Right ventricle myocardium inferior (tissue), 1 donor: ENCODE measurements at regions of chr3 and their contacts with region 1.

Region 1: GRCh38 chr3:57164657-57165573 is at the start of gene IL17RD:
- DNase-seq: peak; percentile 88
- ATAC-seq: peak; percentile 87
- total RNA-seq, gene IL17RD: 6.7 TPM

Region 2: DNA sequence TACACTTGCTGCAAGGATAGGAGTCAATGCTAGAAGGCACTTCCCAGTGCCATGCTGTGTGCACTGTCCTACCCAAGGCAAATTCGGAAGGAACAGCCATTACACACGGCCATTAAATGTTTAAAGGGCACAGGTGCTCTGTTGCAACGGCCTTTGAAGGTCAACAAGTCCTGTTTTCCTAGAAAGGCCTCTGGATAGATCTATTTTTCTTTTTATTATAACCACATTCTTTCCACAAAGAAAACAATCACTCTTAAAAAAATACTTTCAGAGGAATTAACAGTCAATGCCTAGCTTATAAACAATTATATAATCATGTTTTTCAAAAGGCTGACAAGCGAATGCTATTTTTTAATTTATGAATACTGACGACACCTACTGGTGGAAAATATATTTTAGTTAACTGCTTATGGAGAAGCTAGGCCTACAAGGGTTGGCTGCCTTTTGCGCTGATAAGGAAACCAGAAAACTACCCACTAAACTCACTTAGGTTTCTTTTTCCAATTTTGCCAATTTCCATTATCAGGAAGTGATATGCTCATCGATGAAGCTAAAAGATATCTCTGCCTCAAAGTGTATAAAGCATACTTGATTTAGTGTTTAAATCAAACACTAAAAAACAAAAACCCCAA is 365.5 kb before region 1 on chr3:
- intact Hi-C with region 1: no loop called
- DNase-seq: no peak
- ATAC-seq: no peak

Region 3: GRCh38 chr3:57127891-57128518 is 36.9 kb before region 1 on chr3:
- intact Hi-C with region 1: loop called (anchors 5 kb)
- DNase-seq: no peak
- ATAC-seq: peak; percentile 80